K562 (cell line): ENCODE measurements at regions of chr20 and their contacts with region 1.

Region 1: GRCh38 chr20:40265825-40266533 is 423.1 kb downstream of the MAFB start:
- DNase-seq: peak in 1 of 4 experiments; percentile 3
- ATAC-seq: no peak
- H3K4me3 ChIP-seq: no peak overlapping the region
- H3K27ac ChIP-seq: no peak overlapping the region
- H3K4me1 ChIP-seq: no peaks in the 10 kb centered on the region
- H3K27me3 ChIP-seq: no peaks in the 10 kb centered on the region
- CTCF ChIP-seq: 0 out of 6 replicates have a peak, but pooled peaks of 2 of the 3 experiments have one; percentile 9 to 14
- EP300 ChIP-seq: no peak
- POLR2A ChIP-seq: no peak
- RAD21 ChIP-seq: peak; percentile 18 to 28; a peak in 2 of 4 replicates

Region 2: DNA sequence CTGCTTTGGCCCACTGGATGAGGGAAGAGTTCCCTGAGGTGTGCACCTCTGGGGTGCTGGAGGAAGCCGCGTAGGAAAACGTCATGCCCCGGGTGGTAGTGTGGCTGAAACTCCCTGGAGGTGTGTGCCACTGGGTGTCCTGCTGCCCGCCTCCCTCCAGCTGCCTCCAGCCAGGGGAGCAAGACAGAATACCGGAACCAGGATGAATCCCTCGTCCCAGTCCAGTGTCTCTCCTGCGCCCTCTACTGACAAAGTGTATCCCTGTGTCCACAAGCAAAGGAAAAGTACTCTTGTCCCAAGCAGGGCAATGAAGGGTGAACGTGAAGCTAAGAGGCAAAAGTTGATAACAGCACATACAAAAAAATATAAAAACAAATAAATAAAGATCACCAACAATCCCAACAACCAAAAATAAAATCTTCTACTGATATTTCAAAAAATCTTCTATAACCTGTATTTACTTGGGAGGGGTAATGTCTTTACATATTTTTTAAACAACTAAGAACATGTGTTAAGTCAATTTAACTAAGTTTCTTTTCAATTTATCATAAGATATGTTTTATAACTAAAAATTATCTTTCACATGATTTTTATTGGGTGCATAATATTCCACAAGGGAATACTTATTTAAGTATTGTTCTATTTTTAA is 14.6 kb before region 1 on chr20:
- CTCF ChIA-PET with region 1: no interaction called
- POLR2A ChIA-PET with region 1: no interaction called
- in situ Hi-C with region 1: no loop called
- intact Hi-C with region 1: no loop called
- DNase-seq: peak in 3 of 4 experiments; percentile 8 to 51 (median 27)
- ATAC-seq: peak; percentile 63; the same call in 2 of the 3 replicates
- H3K4me3 ChIP-seq: no peak overlapping the region
- H3K27ac ChIP-seq: no peak overlapping the region
- H3K4me1 ChIP-seq: no peaks in the 10 kb centered on the region
- H3K27me3 ChIP-seq: no peaks in the 10 kb centered on the region
- CTCF ChIP-seq: peak; percentile 40 to 66 (median 47)
- EP300 ChIP-seq: no peak
- POLR2A ChIP-seq: no peak
- RAD21 ChIP-seq: peak in 1 of 2 experiments; percentile 44; a peak in 2 of 4 replicates

Region 3: GRCh38 chr20:40471261-40471629 is 205.3 kb after region 1 on chr20:
- CTCF ChIA-PET with region 1: no interaction called
- POLR2A ChIA-PET with region 1: no interaction called
- in situ Hi-C with region 1: no loop called
- intact Hi-C with region 1: loop called (anchors 10 kb)
- DNase-seq: peak in 2 of 4 experiments; percentile 5 to 10
- ATAC-seq: peak; percentile 70
- H3K4me3 ChIP-seq: no peak overlapping the region
- H3K27ac ChIP-seq: no peak overlapping the region
- H3K4me1 ChIP-seq: no peaks in the 10 kb centered on the region
- H3K27me3 ChIP-seq: no peaks in the 10 kb centered on the region
- CTCF ChIP-seq: peak in 2 of 3 experiments; percentile 18 to 28; a peak in 2 of 6 replicates
- EP300 ChIP-seq: no peak
- POLR2A ChIP-seq: no peak
- RAD21 ChIP-seq: peak in 1 of 2 experiments; percentile 19; a peak in 1 of 4 replicates

Region 4: DNA sequence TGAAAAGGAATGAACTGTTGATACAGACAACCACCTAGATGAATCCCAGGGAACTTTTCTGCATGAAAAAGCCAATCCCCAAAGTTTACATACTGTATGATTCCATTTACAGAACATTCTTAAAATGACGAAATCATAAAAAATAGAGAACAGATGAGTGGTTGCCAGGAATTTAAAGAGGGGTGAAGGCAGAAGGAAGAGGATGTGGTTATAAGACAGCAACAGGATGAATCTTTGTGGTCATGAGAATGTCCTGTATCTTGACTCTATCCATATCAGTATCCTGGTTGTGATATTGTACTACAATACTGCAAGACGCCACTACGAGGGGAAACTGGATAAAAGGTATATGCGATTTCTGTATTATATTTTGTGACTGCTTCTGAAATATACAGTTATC is 1170.7 kb after region 1 on chr20:
- CTCF ChIA-PET with region 1: no interaction called
- POLR2A ChIA-PET with region 1: no interaction called
- in situ Hi-C with region 1: no loop called
- intact Hi-C with region 1: no loop called
- DNase-seq: no peak
- ATAC-seq: no peak
- H3K4me3 ChIP-seq: no peak overlapping the region
- H3K27ac ChIP-seq: no peak overlapping the region
- H3K4me1 ChIP-seq: no peaks in the 10 kb centered on the region
- H3K27me3 ChIP-seq: no peaks in the 10 kb centered on the region
- CTCF ChIP-seq: no peak
- EP300 ChIP-seq: no peak
- POLR2A ChIP-seq: no peak
- RAD21 ChIP-seq: no peak